ENCODE measurements at regions of chr20 and their contacts with region 1.

Region 1: DNA sequence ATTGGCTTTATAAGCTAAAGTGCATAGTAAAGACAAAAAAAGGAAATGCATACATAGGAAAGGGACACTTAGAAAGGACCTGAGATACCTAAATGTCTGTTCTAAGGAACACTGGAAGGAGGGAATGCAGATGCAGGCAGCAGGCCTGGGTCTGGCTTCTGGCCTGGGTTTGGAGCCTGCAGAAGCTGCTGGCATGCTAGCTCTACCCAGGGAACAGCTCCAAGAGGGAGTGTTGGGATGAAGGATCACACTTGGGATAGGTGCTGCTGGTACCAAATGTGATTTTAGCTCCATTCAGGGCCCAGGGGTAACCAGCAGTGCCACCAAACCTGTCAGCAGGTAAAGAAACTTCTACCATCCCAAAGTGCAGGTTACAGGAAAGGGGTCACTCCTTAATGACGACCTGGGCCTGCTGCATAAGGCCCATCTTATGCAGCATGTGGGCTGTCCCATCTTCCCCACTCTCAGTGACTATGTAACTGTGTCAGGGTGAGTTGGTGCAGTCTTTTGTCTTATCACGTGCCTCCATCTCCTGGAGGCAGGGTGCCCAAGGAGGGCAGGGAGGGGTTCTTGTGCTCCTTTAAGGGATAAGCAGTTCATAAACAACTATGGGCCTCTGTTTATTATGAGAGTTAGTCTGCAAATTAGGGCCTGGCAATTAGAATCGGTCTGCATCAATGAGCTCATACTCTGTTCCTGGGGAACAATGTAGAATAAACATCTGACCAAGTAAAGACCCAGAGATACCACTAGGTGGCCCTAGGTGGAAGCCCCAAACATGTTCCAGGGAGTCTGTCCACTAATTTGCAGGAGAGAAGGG is 26.9 kb downstream of the DDX27 start:
- DNase-seq: no peak
- ATAC-seq: peak; percentile 64 to 91 (median 86)
- H3K4me3 ChIP-seq: no peak overlapping the region
- H3K27ac ChIP-seq: no peak overlapping the region
- H3K4me1 ChIP-seq: no peaks in the 10 kb centered on the region
- H3K27me3 ChIP-seq: no peaks in the 10 kb centered on the region
- CTCF ChIP-seq: peak; percentile 33 to 37 (median 34)

Region 2: GRCh38 chr20:49323622-49324238 is 77.6 kb after region 1 on chr20:
- intact Hi-C with region 1: loop called in 1 of 3 experiments (anchors 10 kb)
- DNase-seq: no peak
- ATAC-seq: peak in 3 of 4 donors; percentile 65 to 73 (median 66)
- H3K4me3 ChIP-seq: no peak overlapping the region
- H3K27ac ChIP-seq: no peak overlapping the region
- H3K4me1 ChIP-seq: peaks cover 0 to under 1% (median under 1%) of the 10 kb centered on the region in 3 donors
- H3K27me3 ChIP-seq: peaks cover 0 to 12% (median 5%) of the 10 kb centered on the region in 4 donors
- CTCF ChIP-seq: no peak

Measured in pancreas (tissue), 10 donors.